AG04449 (cell line): ENCODE measurements at regions of chr2 and their contacts with region 1.

Region 1: GRCh38 chr2:191318729-191319078 is 73.5 kb downstream of the MYO1B start:
- DNase-seq: no peak
- H3K4me3 ChIP-seq: no peak overlapping the region
- CTCF ChIP-seq: no peak

Region 2: GRCh38 chr2:190110131-190110530 is 1208.6 kb before region 1 on chr2:
- CTCF ChIA-PET with region 1: no interaction called
- POLR2A ChIA-PET with region 1: no interaction called
- DNase-seq: no peak
- H3K4me3 ChIP-seq: no peak overlapping the region
- CTCF ChIP-seq: no peak

Region 3: GRCh38 chr2:191329825-191330224 is 11.1 kb after region 1 on chr2:
- CTCF ChIA-PET with region 1: interaction called, 11 read pairs
- POLR2A ChIA-PET with region 1: interaction called, 3 read pairs
- DNase-seq: no peak
- H3K4me3 ChIP-seq: no peak overlapping the region
- CTCF ChIP-seq: no peak